ENCODE measurements at regions of chr3 and their contacts with region 1.

Region 1: DNA sequence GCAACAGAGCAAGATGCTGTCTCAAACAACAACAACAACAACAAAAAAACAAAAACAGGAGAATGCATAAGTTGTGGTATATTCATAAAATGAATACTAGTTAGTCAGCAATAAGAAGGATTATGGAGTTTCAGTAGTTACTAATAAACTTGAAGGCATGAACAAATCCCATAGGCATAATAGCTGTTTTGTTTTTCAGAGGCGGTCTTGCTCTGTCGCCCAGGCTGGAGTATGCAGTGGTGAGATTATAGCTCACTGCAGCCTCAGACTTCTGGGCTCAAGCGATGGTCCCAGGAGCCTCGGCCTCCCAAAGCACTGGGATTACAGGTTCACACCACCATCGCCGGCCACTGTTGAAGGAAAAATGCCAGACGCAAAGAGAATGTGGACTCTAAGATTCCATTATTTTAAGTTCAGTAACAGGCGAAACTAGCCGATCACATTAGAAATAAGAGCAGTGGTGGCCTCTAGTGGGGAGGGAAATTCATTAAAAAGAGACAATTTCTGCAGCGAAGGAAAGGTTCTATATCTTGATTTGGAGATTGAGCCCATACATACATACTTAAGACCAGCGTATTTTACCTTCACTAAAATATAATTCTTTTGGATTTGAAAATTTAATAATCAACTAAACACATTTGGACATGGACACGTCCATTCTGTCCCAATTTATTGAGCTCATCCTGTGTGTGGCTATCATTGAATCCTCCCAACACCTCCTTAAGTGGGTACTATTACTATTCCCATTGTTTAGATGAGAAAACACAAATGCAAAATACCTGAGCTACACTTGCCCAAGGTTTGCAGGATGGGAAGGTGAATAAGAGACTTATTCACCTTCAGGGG is 27.4 kb upstream of the HDAC11 start:
- DNase-seq: no peak
- H3K4me3 ChIP-seq: peak overlapping the region; percentile 18; the same call in 1 of the 2 replicates
- CTCF ChIP-seq: peak; percentile 49

Region 2: DNA sequence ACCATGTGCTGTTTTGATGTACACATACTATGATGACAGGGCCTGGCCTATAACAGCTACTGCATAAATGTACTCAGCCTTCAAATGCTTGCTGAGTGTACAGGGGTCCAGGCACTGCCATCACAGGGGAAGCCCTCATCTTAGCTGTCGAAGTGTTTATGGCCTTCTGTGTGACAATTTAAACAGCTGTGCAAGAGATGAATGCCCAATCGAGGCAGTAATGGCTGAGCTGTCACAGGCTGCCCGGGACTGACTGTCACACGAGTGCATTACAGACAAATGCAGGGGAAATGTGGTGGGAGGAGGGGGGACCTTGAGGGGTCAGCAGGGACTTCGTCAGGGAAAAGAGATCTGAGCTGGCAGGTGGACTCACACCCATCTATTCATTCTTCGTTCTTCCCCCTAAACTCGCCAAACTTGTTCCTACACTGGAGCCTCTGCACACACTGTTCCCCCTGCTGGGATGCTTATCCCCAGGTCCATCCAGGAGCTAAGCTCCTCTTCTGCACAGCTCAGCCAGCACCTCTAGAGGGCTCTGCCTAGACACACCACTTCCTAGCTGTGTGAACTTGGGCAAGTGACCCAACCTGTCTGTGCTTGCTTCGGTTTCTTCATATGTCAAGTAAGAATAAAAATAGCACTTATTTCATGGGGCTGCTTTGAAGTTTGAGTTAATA is 223.3 kb before region 1 on chr3:
- CTCF ChIA-PET with region 1: interaction called, 12 read pairs
- POLR2A ChIA-PET with region 1: no interaction called
- DNase-seq: no peak
- H3K4me3 ChIP-seq: no peak overlapping the region
- CTCF ChIP-seq: no peak

Region 3: GRCh38 chr3:13353936-13354542 is 98.7 kb before region 1 on chr3:
- CTCF ChIA-PET with region 1: interaction called, 11 read pairs
- POLR2A ChIA-PET with region 1: no interaction called
- DNase-seq: no peak
- H3K4me3 ChIP-seq: no peak overlapping the region
- CTCF ChIP-seq: peak; percentile 36

Region 4: GRCh38 chr3:13466781-13467180 is 14.1 kb after region 1 on chr3:
- CTCF ChIA-PET with region 1: interaction called, 40 read pairs
- POLR2A ChIA-PET with region 1: no interaction called
- DNase-seq: no peak
- H3K4me3 ChIP-seq: no peak overlapping the region
- CTCF ChIP-seq: no peak

Region 5: DNA sequence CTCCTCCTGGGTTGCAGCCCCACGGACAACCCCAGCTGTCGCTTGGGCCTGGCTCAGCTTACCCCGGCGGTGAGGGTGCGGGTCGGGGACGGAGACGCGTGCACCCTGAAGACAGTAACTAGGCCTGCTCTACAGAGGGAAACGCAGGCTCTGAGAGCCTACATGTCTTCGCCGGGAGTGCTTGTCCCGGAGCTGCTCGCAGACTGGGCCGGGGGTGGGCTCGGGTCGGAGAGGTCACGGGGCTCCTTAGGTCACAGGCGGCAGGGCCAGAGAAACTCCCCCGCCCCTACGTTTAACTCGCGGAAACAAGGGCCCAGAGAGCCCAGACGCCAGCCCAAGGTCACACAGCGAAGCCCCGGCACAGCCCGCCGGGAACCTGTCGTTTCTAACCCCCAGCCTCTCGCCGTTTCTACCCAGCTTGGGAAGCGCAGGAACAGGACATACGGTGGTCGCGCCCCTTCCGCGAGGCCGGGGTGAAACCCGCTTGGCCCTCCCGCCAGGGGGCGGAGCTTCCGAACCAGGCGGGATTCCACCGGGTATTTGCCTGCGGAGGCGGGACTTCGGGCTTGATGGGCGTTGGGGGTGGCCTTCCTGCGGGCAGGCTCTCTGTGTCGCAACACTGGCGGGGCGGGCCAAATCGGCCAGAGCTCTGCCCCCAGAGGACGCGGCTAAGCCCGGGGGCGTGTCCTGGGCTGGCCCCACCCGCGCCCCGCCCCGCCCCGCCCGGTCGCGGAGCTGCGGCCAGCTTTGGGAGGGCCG is 27.0 kb after region 1 on chr3 and contains the start of gene HDAC11:
- CTCF ChIA-PET with region 1: interaction called, 12 read pairs
- POLR2A ChIA-PET with region 1: interaction called, 4 read pairs
- DNase-seq: peak; percentile 74
- H3K4me3 ChIP-seq: peak within 1 kb of the TSS; percentile 78
- CTCF ChIP-seq: no peak